ENCODE measurements at regions of chr14 and their contacts with region 1.

Region 1: GRCh38 chr14:101761032-101761880 is at the start of gene PPP2R5C:
- DNase-seq: peak; percentile 82 to 98 (median 90)

Region 2: GRCh38 chr14:101707068-101707842 is 54.0 kb before region 1 on chr14:
- intact Hi-C with region 1: loop called (anchors 5 kb)
- DNase-seq: peak in 2 of 10 donors; percentile 29 to 36

Region 3: GRCh38 chr14:101947906-101948665 is 186.8 kb after region 1 on chr14:
- intact Hi-C with region 1: loop called (anchors 5 kb)
- DNase-seq: peak; percentile 97 to 100 (median 100)

Region 4: GRCh38 chr14:101964297-101965144 is 203.3 kb after region 1 on chr14 and contains the start of gene DYNC1H1:
- intact Hi-C with region 1: loop called (anchors 5 kb)
- DNase-seq: peak; percentile 85 to 99 (median 94)

Region 5: GRCh38 chr14:102442241-102443211 is 681.3 kb after region 1 on chr14:
- intact Hi-C with region 1: no loop called
- DNase-seq: peak in 2 of 10 donors; percentile 30 to 63

Measured in posterior cingulate gyrus (tissue), 11 donors.